ENCODE measurements at regions of chr3 and their contacts with region 1.

Region 1: DNA sequence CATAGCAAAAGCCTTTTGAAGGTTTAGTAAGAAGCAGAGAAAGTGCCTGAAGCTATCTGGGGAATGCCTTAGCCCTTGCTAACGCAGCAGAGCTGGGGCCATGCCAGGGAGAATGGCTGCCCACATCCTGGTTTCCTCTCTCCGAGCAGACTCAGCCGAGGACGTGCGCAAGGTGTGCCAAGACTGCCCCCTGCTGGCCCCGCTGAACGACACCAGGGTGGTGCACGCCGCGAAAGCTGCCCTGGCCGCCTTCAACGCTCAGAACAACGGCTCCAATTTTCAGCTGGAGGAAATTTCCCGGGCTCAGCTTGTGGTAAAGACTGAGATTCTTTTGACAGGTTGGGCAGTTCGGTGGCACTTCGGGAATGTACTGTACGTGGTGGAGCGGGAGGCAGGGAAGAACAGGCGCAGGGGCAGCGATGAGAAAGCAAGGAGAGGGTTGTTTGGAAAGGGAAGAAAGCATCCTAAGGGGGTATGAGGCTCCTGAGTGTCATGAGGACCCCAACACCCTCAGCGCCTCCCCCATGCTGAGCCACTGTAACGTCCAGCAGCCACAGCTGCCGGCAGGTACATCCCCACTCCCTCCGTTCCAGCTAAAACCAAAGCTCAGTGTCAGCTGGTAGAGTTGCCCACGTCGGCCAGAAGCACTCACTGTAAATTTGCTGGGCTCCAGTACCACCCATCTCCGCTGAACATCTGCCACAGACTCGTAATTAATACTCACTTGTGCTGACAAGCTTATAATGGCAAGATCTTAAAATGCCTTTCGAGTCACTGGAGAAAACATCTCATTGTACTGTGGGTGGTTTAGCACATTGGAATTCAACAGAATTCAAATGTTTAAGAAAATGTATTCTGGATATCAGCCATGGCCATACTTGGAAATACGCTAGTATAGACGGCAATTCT is 4.4 kb downstream of the AHSG start:
- DNase-seq: no peak
- H3K4me3 ChIP-seq: peak overlapping the region in 3 of 4 donors; percentile 6 to 32 (median 22)
- H3K27ac ChIP-seq: no peak overlapping the region
- H3K4me1 ChIP-seq: peaks cover 0 to 18% (median 12%) of the 10 kb centered on the region in 4 donors
- H3K27me3 ChIP-seq: peaks cover 0 to 57% (median 0%) of the 10 kb centered on the region in 4 donors
- CTCF ChIP-seq: peak; percentile 83 to 92 (median 87)
- EP300 ChIP-seq: no peak
- POLR2A ChIP-seq: no peak

Region 2: GRCh38 chr3:186669378-186670084 is 52.2 kb after region 1 on chr3:
- intact Hi-C with region 1: no loop called
- DNase-seq: no peak
- H3K4me3 ChIP-seq: no peak overlapping the region
- H3K27ac ChIP-seq: no peak overlapping the region
- H3K4me1 ChIP-seq: no peaks in the 10 kb centered on the region
- H3K27me3 ChIP-seq: peaks cover 0 to 32% (median 0%) of the 10 kb centered on the region in 4 donors
- CTCF ChIP-seq: no peak
- EP300 ChIP-seq: no peak
- POLR2A ChIP-seq: no peak

Region 3: GRCh38 chr3:186821429-186822367 is 204.4 kb after region 1 on chr3:
- intact Hi-C with region 1: loop called (anchors 5 kb)
- DNase-seq: no peak
- H3K4me3 ChIP-seq: no peak overlapping the region
- H3K27ac ChIP-seq: no peak overlapping the region
- H3K4me1 ChIP-seq: peaks cover 5 to 22% (median 16%) of the 10 kb centered on the region in 4 donors
- H3K27me3 ChIP-seq: peaks cover 0 to 25% (median 17%) of the 10 kb centered on the region in 4 donors
- CTCF ChIP-seq: peak; percentile 52 to 69 (median 60)
- EP300 ChIP-seq: no peak
- POLR2A ChIP-seq: no peak

Region 4: GRCh38 chr3:187066228-187066995 is 449.1 kb after region 1 on chr3:
- intact Hi-C with region 1: no loop called
- DNase-seq: peak; percentile 53
- H3K4me3 ChIP-seq: no peak overlapping the region
- H3K27ac ChIP-seq: no peak overlapping the region
- H3K4me1 ChIP-seq: peaks cover 0 to 16% (median 7%) of the 10 kb centered on the region in 4 donors
- H3K27me3 ChIP-seq: no peaks in the 10 kb centered on the region
- CTCF ChIP-seq: no peak
- EP300 ChIP-seq: no peak
- POLR2A ChIP-seq: no peak

Measured in esophagus muscularis mucosa (tissue), 4 donors.